ENCODE measurements at regions of chr7 and their contacts with region 1.

Region 1: DNA sequence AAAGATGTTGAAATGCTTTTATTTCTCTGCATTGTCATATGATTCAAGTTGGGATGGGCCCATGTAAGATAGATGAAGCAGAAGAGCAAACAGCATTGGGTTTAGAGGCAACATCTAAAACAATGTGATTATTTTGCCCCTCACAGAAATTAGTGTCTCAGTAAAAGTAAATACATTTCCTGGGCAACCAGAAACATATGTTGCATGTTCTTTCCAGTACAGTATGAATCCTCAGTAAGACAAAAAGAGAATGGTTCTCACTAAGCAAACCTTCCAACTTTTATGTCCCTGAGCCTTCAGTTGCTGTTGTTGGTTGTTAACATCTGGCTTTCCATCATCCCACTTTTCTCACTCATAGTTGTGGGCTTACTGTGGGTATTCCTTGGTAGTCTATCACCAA is 222.5 kb upstream of the PRPS1L1 start:
- DNase-seq: no peak
- ATAC-seq: no peak
- H3K4me3 ChIP-seq: no peak overlapping the region
- H3K4me3 Mint-ChIP-seq: no peak overlapping the region
- H3K27ac ChIP-seq: no peak overlapping the region
- H3K27ac Mint-ChIP-seq: no peak overlapping the region
- H3K4me1 ChIP-seq: no peaks in the 10 kb centered on the region
- H3K4me1 Mint-ChIP-seq: no peaks in the 10 kb centered on the region
- H3K27me3 ChIP-seq: no peaks in the 10 kb centered on the region
- H3K27me3 Mint-ChIP-seq: no peaks in the 10 kb centered on the region
- CTCF ChIP-seq: no peak

Region 2: GRCh38 chr7:17706734-17707133 is 543.4 kb before region 1 on chr7:
- CTCF ChIA-PET with region 1: no interaction called
- POLR2A ChIA-PET with region 1: no interaction called
- intact Hi-C with region 1: no loop called
- DNase-seq: peak; percentile 44
- ATAC-seq: no peak
- H3K4me3 ChIP-seq: no peak overlapping the region
- H3K4me3 Mint-ChIP-seq: no peak overlapping the region
- H3K27ac ChIP-seq: no peak overlapping the region
- H3K27ac Mint-ChIP-seq: no peak overlapping the region
- H3K4me1 ChIP-seq: no peaks in the 10 kb centered on the region
- H3K4me1 Mint-ChIP-seq: no peaks in the 10 kb centered on the region
- H3K27me3 ChIP-seq: no peaks in the 10 kb centered on the region
- H3K27me3 Mint-ChIP-seq: peaks cover 21% of the 10 kb centered on the region
- CTCF ChIP-seq: peak; percentile 58

Region 3: GRCh38 chr7:18221377-18222293 is 28.5 kb before region 1 on chr7:
- CTCF ChIA-PET with region 1: interaction called, 4 read pairs
- POLR2A ChIA-PET with region 1: interaction called, 14 read pairs
- intact Hi-C with region 1: no loop called
- DNase-seq: no peak
- ATAC-seq: no peak
- H3K4me3 ChIP-seq: no peak overlapping the region
- H3K4me3 Mint-ChIP-seq: no peak overlapping the region
- H3K27ac ChIP-seq: peak overlapping the region in 1 of 2 donors; percentile 4
- H3K27ac Mint-ChIP-seq: peak overlapping the region; percentile 22
- H3K4me1 ChIP-seq: peaks cover 23 to 53% of the 10 kb centered on the region in 2 donors
- H3K4me1 Mint-ChIP-seq: peaks cover 54% of the 10 kb centered on the region
- H3K27me3 ChIP-seq: no peaks in the 10 kb centered on the region
- H3K27me3 Mint-ChIP-seq: no peaks in the 10 kb centered on the region
- CTCF ChIP-seq: no peak

Measured in B cell (primary cell).